AG04450 (cell line): ENCODE measurements at regions of chr10 and their contacts with region 1.

Region 1: DNA sequence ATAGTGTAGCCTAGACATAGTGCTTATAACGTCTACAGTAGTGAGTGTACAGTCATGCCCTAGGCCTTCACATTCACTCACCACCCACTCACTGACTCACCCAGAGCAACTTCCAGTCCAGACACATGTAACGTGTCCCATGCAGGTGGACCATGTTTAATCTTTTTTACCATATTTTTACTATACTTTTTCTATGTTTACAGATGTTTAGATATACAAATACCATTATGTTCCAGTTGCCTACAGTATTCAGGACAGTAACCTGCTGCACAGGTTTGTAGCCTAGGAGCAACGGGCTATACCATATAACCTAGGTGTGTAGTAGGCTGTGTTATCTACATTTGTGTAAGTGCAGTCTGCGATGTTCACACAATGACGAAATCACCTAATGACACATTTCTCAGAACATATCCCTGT is 11.0 kb downstream of the MPP7 start:
- DNase-seq: peak; percentile 55
- H3K4me3 ChIP-seq: no peak overlapping the region
- H3K27ac ChIP-seq: no peak overlapping the region
- H3K27me3 ChIP-seq: peaks cover 3% of the 10 kb centered on the region
- CTCF ChIP-seq: no peak

Region 2: DNA sequence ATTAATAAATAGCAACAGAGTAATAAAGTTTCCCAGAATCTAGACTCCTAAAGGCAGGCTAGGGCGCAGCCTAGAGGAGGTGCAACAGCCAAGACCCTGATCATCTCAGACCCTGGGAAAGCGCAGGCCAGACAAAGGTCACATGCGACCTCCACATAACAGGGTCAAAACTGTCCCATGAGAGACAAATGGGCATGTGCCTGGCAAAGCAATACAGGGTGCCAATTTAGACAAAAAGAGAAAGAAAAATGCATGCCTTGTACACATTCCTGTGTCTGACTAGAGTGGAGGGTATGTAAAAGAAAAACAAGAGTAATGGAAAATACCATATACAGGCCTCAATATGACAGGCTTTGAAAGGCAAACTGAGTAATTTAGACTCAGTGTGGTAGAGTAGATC is 11.2 kb before region 1 on chr10:
- CTCF ChIA-PET with region 1: no interaction called
- POLR2A ChIA-PET with region 1: no interaction called
- DNase-seq: no peak
- H3K4me3 ChIP-seq: no peak overlapping the region
- H3K27ac ChIP-seq: no peak overlapping the region
- H3K27me3 ChIP-seq: peaks cover 2% of the 10 kb centered on the region
- CTCF ChIP-seq: no peak

Region 3: DNA sequence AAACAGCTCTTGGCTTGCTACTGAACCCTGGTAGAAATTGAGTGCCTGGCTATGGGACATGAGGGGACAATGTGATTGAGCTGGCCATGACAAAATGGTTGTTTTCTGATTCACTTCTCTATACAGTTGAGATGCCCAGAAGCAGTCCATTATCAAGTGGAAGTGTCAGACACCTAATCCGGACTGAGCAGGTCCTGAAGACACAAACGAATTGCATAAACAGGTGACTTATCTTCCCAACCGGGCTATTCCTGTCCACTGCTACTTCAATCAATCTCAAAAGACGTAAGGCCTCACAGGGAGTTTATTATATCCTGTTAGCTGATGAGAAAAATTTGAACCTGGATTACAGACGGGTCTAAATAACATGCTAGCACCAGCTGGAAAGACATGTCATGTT is 135.5 kb after region 1 on chr10:
- CTCF ChIA-PET with region 1: interaction called, 19 read pairs
- POLR2A ChIA-PET with region 1: no interaction called
- DNase-seq: no peak
- H3K4me3 ChIP-seq: no peak overlapping the region
- H3K27ac ChIP-seq: no peak overlapping the region
- H3K27me3 ChIP-seq: peaks cover 4% of the 10 kb centered on the region
- CTCF ChIP-seq: no peak

Region 4: GRCh38 chr10:28569506-28570159 is 277.7 kb after region 1 on chr10:
- CTCF ChIA-PET with region 1: no interaction called
- POLR2A ChIA-PET with region 1: no interaction called
- DNase-seq: peak; percentile 23
- H3K4me3 ChIP-seq: no peak overlapping the region
- H3K27ac ChIP-seq: no peak overlapping the region
- H3K27me3 ChIP-seq: no peaks in the 10 kb centered on the region
- CTCF ChIP-seq: no peak

Region 5: GRCh38 chr10:28879875-28880682 is 588.2 kb after region 1 on chr10:
- CTCF ChIA-PET with region 1: no interaction called
- POLR2A ChIA-PET with region 1: no interaction called
- DNase-seq: no peak
- H3K4me3 ChIP-seq: no peak overlapping the region
- H3K27ac ChIP-seq: no peak overlapping the region
- H3K27me3 ChIP-seq: peaks cover 4% of the 10 kb centered on the region
- CTCF ChIP-seq: no peak